ENCODE measurements at regions of chr2 and their contacts with region 1.

Region 1: DNA sequence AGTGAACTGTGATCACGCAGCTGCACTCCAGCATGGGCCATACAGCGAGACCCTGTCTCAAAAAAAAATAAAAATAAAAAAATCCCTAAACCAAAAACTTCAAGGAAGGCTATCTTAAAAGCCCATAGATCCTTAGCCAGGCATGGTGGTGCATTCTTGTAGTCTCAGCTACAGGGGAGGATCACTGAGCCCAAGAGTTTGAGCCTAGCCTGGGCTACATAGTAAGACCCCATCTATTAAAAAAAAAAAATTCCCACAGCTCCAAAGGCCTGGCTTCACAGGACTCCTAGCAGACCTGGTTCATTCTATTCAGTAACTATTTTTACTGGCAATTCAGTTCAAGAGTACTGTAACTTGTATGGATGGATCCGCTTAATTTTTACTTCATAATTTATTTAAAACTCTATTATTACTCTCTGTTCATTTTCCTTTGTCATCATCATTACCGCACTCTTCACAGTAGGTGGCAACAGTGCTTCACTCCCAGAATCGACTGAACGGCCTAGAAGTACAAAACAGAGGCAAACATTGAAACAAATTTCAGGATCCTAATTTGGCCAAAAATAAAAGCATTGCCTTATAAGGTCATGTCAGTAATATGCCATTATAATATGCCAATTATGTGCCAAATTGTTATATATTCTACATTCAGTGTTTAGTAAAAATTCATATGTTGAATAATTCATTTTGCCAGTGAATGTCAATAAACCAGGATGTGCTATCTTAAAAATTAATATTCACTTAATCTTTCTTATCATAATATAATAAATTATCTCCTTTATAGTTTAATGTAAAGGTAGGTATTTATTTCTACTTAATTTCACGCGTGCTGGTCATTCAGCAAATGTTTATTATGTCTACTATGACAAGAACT is 14.3 kb upstream of the STAM2 start:
- DNase-seq: peak in 1 of 2 donors; percentile 46
- H3K4me3 ChIP-seq: no peak overlapping the region
- H3K27ac ChIP-seq: no peak overlapping the region
- H3K4me1 ChIP-seq: peaks cover 0 to 5% (median 0%) of the 10 kb centered on the region in 4 donors
- H3K27me3 ChIP-seq: no peaks in the 10 kb centered on the region
- CTCF ChIP-seq: peak; percentile 88 to 89

Region 2: GRCh38 chr2:152126664-152127063 is 63.2 kb before region 1 on chr2:
- intact Hi-C with region 1: no loop called
- DNase-seq: no peak
- H3K4me3 ChIP-seq: no peak overlapping the region
- H3K27ac ChIP-seq: no peak overlapping the region
- H3K4me1 ChIP-seq: no peaks in the 10 kb centered on the region
- H3K27me3 ChIP-seq: no peaks in the 10 kb centered on the region
- CTCF ChIP-seq: no peak

Region 3: DNA sequence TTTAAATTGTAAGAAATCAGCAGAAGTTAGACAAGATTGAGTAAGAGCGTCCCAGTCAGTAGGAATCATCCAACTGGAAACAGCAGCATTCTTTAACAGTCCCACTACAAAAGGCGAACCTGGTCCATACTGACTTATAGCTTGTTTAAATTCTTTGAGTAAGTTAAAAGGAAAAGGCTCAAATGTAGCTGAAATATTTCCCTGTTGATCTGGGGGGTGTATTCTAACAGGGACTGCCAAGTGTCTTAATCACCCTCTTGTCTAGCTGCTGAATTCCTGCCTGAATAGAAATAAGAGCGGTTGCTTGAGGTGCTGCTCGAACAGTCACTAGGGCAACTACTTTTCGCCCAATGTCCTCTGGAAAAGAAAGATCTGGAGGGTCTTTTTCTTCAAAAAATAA is 88.7 kb after region 1 on chr2:
- intact Hi-C with region 1: no loop called
- DNase-seq: no peak
- H3K4me3 ChIP-seq: no peak overlapping the region
- H3K27ac ChIP-seq: no peak overlapping the region
- H3K4me1 ChIP-seq: no peaks in the 10 kb centered on the region
- H3K27me3 ChIP-seq: no peaks in the 10 kb centered on the region
- CTCF ChIP-seq: no peak

Region 4: GRCh38 chr2:152402780-152403759 is 213.2 kb after region 1 on chr2:
- intact Hi-C with region 1: loop called (anchors 5 kb)
- DNase-seq: no peak
- H3K4me3 ChIP-seq: no peak overlapping the region
- H3K27ac ChIP-seq: peak overlapping the region; percentile 46 to 63
- H3K4me1 ChIP-seq: peaks cover 8 to 77% (median 52%) of the 10 kb centered on the region in 4 donors
- H3K27me3 ChIP-seq: no peaks in the 10 kb centered on the region
- CTCF ChIP-seq: no peak

Region 5: GRCh38 chr2:152635635-152636298 is 445.9 kb after region 1 on chr2:
- intact Hi-C with region 1: loop called (anchors 5 kb)
- DNase-seq: peak in 1 of 2 donors; percentile 54
- H3K4me3 ChIP-seq: no peak overlapping the region
- H3K27ac ChIP-seq: no peak overlapping the region
- H3K4me1 ChIP-seq: no peaks in the 10 kb centered on the region
- H3K27me3 ChIP-seq: no peaks in the 10 kb centered on the region
- CTCF ChIP-seq: peak; percentile 76 to 78

Region 6: GRCh38 chr2:152858594-152859265 is 668.9 kb after region 1 on chr2:
- intact Hi-C with region 1: loop called (anchors 10 kb)
- DNase-seq: no peak
- H3K4me3 ChIP-seq: no peak overlapping the region
- H3K27ac ChIP-seq: no peak overlapping the region
- H3K4me1 ChIP-seq: no peaks in the 10 kb centered on the region
- H3K27me3 ChIP-seq: no peaks in the 10 kb centered on the region
- CTCF ChIP-seq: no peak

Measured in tibial artery (tissue), 4 donors.